Activated B cell treated with CpG ODN at 0.5 μM for 24 hours (primary cell): ENCODE measurements at regions of chr9 and their contacts with region 1.

Region 1: GRCh38 chr9:113376634-113377567 is at the start of gene HDHD3:
- DNase-seq: peak; percentile 78
- ATAC-seq: peak; percentile 90
- H3K4me3 Mint-ChIP-seq: peak within 1 kb of the TSS; percentile 92
- H3K27ac Mint-ChIP-seq: peak within 1 kb of the TSS; percentile 81
- H3K4me1 Mint-ChIP-seq: peaks cover 32% of the 10 kb centered on the region
- H3K27me3 Mint-ChIP-seq: no peaks in the 10 kb centered on the region
- CTCF ChIP-seq: no peak
- total RNA-seq, gene HDHD3: 23.4 and 23.9 TPM in 2 replicates

Region 2: GRCh38 chr9:113340017-113340699 is 36.7 kb before region 1 on chr9 and contains the start of gene WDR31:
- CTCF ChIA-PET with region 1: no interaction called
- POLR2A ChIA-PET with region 1: interaction called, 11 read pairs
- intact Hi-C with region 1: loop called (anchors 1 kb)
- DNase-seq: peak; percentile 78
- ATAC-seq: peak; percentile 98
- H3K4me3 Mint-ChIP-seq: peak within 1 kb of the TSS; percentile 84
- H3K27ac Mint-ChIP-seq: peak within 1 kb of the TSS; percentile 74
- H3K4me1 Mint-ChIP-seq: peaks cover 11% of the 10 kb centered on the region
- H3K27me3 Mint-ChIP-seq: peaks cover 3% of the 10 kb centered on the region
- CTCF ChIP-seq: no peak
- total RNA-seq, gene WDR31: 0.73 and 1.6 TPM in 2 replicates

Region 3: GRCh38 chr9:113349445-113350094 is 27.3 kb before region 1 on chr9 and contains the start of gene BSPRY:
- CTCF ChIA-PET with region 1: no interaction called
- POLR2A ChIA-PET with region 1: interaction called, 16 read pairs
- intact Hi-C with region 1: loop called (anchors 1 kb)
- DNase-seq: peak; percentile 39
- ATAC-seq: peak; percentile 59
- H3K4me3 Mint-ChIP-seq: peak within 1 kb of the TSS; percentile 82
- H3K27ac Mint-ChIP-seq: peak within 1 kb of the TSS; percentile 30
- H3K4me1 Mint-ChIP-seq: peaks cover 20% of the 10 kb centered on the region
- H3K27me3 Mint-ChIP-seq: peaks cover 7% of the 10 kb centered on the region
- CTCF ChIP-seq: no peak
- total RNA-seq, gene BSPRY: 1.1 and 1.3 TPM in 2 replicates

Region 4: DNA sequence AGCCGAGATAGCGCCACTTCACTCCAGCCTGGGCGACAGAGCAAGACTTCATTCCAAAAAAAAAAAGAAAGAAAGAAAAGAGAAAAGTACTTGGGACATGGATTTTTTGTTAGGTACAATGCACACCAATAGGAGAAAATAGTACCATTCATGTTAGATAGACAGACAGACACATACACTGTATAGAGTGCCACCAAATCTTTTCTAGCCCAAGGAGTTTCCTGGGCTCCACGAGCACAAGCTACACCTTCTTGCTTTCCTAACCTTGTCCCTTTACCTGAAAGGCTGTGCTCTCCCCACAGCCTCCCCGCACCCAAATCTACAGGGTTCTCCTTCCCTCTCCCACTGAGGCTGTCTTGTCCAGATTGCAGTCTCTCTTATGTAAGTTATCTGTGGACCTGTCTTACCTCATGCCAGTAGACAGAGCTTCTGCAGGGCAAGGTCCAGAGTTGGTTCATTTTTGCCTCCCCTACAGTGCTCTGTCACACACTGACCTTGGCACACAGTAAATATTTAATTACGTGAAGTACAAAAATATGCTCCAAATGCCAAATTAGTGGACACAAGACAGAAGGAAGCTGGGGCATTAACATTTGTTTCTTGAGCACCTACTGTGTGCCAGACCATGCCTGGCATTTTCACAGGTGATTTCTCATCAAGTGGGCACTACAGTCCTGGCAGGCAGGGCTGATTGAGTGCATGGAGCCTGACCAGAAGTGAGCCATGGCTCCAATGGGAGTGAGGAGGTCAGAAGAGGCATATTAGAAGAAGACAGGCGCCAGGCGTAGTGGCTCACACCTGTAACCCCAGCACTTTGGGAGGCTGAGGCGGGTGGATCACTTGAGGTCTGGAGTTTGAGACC is 18.3 kb after region 1 on chr9:
- CTCF ChIA-PET with region 1: no interaction called
- POLR2A ChIA-PET with region 1: interaction called, 16 read pairs
- intact Hi-C with region 1: no loop called
- DNase-seq: no peak
- ATAC-seq: no peak
- H3K4me3 Mint-ChIP-seq: no peak overlapping the region
- H3K27ac Mint-ChIP-seq: no peak overlapping the region
- H3K4me1 Mint-ChIP-seq: peaks cover 5% of the 10 kb centered on the region
- H3K27me3 Mint-ChIP-seq: no peaks in the 10 kb centered on the region
- CTCF ChIP-seq: no peak